ENCODE measurements at regions of chr9 and their contacts with region 1.

Region 1: DNA sequence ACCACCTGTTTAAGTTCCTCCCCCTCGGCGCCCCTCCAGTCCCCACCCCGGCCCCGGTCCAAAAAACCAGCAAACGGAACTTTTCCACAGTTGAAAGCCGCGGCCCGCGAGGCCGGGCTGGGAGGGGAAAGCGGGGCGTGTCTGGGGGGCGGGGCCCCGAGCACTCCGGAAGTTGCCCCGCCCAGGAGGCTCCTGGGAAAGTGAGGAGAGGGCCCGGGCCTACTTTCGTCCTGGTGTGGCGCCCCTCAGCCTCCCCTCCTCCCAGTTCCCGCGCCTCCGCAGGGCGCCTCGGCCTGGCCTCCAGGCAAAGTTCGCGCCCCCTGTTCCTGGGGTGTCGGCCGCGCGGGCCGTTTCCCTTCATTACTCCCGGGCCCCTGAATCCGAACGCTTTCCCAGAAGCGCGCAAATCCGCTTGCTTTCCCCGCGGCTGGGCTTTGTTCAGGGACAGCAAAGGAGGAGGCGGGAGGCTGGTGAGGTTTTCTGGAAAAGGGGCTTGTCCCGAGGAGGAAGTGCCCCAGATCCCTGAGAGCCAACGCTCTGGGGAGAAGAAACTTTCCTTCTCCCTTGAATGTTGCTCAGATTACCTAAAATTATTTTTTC is 4.5 kb upstream of the DMRT3 start:
- DNase-seq: no peak
- ATAC-seq: no peak
- H3K4me3 ChIP-seq: no peak overlapping the region
- H3K4me3 Mint-ChIP-seq: peak overlapping the region in 9 of 10 donors; percentile 2 to 71 (median 56)
- H3K27ac ChIP-seq: no peak overlapping the region
- H3K27ac Mint-ChIP-seq: peak overlapping the region in 1 of 9 donors; percentile 52
- H3K4me1 ChIP-seq: peaks cover 0 to 4% of the 10 kb centered on the region in 2 donors
- H3K4me1 Mint-ChIP-seq: peaks cover 15 to 54% (median 38%) of the 10 kb centered on the region in 7 donors
- H3K27me3 ChIP-seq: peaks cover 7 to 48% of the 10 kb centered on the region in 2 donors
- H3K27me3 Mint-ChIP-seq: peaks cover 65 to 87% (median 71%) of the 10 kb centered on the region in 5 donors

Region 2: DNA sequence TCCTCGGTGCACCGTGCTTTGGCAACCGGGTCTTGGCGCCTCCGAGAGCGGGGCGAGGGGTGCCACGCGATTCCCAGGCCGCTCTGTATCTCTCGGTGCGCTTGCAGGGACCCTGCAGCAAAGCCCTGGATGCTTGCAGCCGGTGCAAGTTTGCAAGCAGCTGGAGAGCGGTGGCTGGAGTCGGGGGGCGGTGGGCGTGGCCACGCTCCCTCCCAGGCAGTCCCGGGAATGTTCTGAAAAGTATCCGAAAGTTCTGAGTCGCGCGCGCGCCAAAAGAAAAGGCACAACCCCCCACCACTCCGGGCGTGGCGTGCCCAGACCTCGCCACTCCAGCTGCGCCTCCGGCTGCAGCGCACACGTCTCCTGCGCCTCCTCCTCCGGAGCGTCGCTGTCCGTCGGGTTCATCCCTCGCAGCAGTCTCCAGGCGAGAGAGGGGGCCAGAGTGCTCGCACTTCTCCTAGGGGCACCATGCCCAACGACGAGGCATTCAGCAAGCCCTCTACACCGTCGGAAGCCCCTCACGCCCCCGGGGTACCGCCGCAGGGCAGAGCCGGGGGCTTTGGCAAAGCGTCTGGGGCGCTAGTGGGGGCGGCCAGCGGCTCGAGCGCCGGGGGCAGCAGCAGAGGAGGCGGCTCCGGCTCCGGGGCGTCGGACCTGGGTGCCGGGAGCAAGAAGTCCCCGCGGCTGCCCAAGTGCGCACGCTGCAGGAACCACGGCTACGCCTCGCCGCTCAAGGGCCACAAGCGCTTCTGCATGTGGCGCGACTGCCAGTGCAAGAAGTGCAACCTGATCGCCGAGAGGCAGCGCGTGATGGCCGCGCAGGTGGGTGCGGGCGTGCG is 130.4 kb before region 1 on chr9 and contains the start of gene DMRT1:
- CTCF ChIA-PET with region 1: no interaction called
- POLR2A ChIA-PET with region 1: no interaction called
- intact Hi-C with region 1: loop called in 1 of 2 experiments (anchors 5 kb)
- DNase-seq: no peak
- ATAC-seq: no peak
- H3K4me3 ChIP-seq: no peak within 1 kb of the TSS
- H3K4me3 Mint-ChIP-seq: peak within 1 kb of the TSS in 4 of 10 donors; percentile 20 to 62 (median 38)
- H3K27ac ChIP-seq: no peak within 1 kb of the TSS
- H3K27ac Mint-ChIP-seq: no peak within 1 kb of the TSS
- H3K4me1 ChIP-seq: no peaks in the 10 kb centered on the region
- H3K4me1 Mint-ChIP-seq: peaks cover 0 to 21% (median 14%) of the 10 kb centered on the region in 7 donors
- H3K27me3 ChIP-seq: peaks cover 3 to 4% of the 10 kb centered on the region in 2 donors
- H3K27me3 Mint-ChIP-seq: peaks cover 49 to 62% (median 59%) of the 10 kb centered on the region in 5 donors
- total RNA-seq, gene DMRT1: not detected

Region 3: GRCh38 chr9:1050116-1050800 is 78.3 kb after region 1 on chr9 and contains the start of gene DMRT2:
- CTCF ChIA-PET with region 1: no interaction called
- POLR2A ChIA-PET with region 1: no interaction called
- intact Hi-C with region 1: loop called in 1 of 2 experiments (anchors 2 kb)
- DNase-seq: no peak
- ATAC-seq: peak; percentile 26
- H3K4me3 ChIP-seq: no peak within 1 kb of the TSS
- H3K4me3 Mint-ChIP-seq: peak within 1 kb of the TSS; percentile 31 to 91 (median 72)
- H3K27ac ChIP-seq: no peak within 1 kb of the TSS
- H3K27ac Mint-ChIP-seq: peak within 1 kb of the TSS in 2 of 9 donors; percentile 56 to 81
- H3K4me1 ChIP-seq: peaks cover 11 to 32% of the 10 kb centered on the region in 2 donors
- H3K4me1 Mint-ChIP-seq: peaks cover 38 to 62% (median 51%) of the 10 kb centered on the region in 7 donors
- H3K27me3 ChIP-seq: peaks cover 6 to 55% of the 10 kb centered on the region in 2 donors
- H3K27me3 Mint-ChIP-seq: peaks cover 79 to 94% (median 87%) of the 10 kb centered on the region in 5 donors
- total RNA-seq, gene DMRT2: 0.44 TPM in 1 of 5 experiments, not detected in the others

Region 4: DNA sequence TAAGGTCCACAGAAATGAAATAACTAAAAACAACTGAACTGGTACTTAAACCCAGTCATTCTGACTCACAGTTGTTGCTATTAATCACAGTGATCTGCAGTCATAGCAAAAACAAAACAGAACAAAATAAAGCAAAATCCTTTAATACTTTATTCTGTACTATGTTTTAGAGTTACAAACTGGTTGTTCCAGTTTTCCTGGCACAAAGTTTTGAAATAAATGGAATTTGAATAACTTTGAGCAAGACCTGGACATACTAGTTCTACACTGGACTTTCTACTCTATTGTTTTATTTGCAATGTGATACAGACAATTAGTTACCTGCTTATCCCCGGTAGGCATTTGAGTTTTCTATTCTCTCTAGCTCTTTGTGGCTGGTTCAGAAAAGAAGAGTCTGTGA is 226.1 kb after region 1 on chr9:
- CTCF ChIA-PET with region 1: no interaction called
- POLR2A ChIA-PET with region 1: no interaction called
- intact Hi-C with region 1: no loop called
- DNase-seq: no peak
- ATAC-seq: no peak
- H3K4me3 ChIP-seq: no peak overlapping the region
- H3K4me3 Mint-ChIP-seq: no peak overlapping the region
- H3K27ac ChIP-seq: no peak overlapping the region
- H3K27ac Mint-ChIP-seq: no peak overlapping the region
- H3K4me1 ChIP-seq: no peaks in the 10 kb centered on the region
- H3K4me1 Mint-ChIP-seq: peaks cover 0 to 1% (median 0%) of the 10 kb centered on the region in 7 donors
- H3K27me3 ChIP-seq: no peaks in the 10 kb centered on the region
- H3K27me3 Mint-ChIP-seq: peaks cover 0 to 8% (median 3%) of the 10 kb centered on the region in 5 donors

Region 5: GRCh38 chr9:2340046-2340771 is 1368.2 kb after region 1 on chr9:
- CTCF ChIA-PET with region 1: no interaction called
- POLR2A ChIA-PET with region 1: no interaction called
- intact Hi-C with region 1: no loop called
- DNase-seq: no peak
- ATAC-seq: no peak
- H3K4me3 ChIP-seq: no peak overlapping the region
- H3K4me3 Mint-ChIP-seq: no peak overlapping the region
- H3K27ac ChIP-seq: no peak overlapping the region
- H3K27ac Mint-ChIP-seq: no peak overlapping the region
- H3K4me1 ChIP-seq: no peaks in the 10 kb centered on the region
- H3K4me1 Mint-ChIP-seq: no peaks in the 10 kb centered on the region
- H3K27me3 ChIP-seq: no peaks in the 10 kb centered on the region
- H3K27me3 Mint-ChIP-seq: peaks cover 0 to 15% (median 2%) of the 10 kb centered on the region in 5 donors

Measured in naive thymus-derived CD4-positive, alpha-beta T cell (primary cell).